Activated CD4-positive, alpha-beta T cell treated with anti-CD3 and anti-CD28 coated beads for 36 hours (primary cell): ENCODE measurements at regions of chr3 and their contacts with region 1.

Region 1: GRCh38 chr3:16048435-16049318 is 125.8 kb upstream of the GALNT15 start:
- DNase-seq: peak; percentile 63
- ATAC-seq: peak; percentile 94
- H3K4me3 Mint-ChIP-seq: no peak overlapping the region
- H3K27ac Mint-ChIP-seq: no peak overlapping the region
- H3K4me1 Mint-ChIP-seq: peaks cover 6% of the 10 kb centered on the region
- H3K27me3 Mint-ChIP-seq: no peaks in the 10 kb centered on the region

Region 2: DNA sequence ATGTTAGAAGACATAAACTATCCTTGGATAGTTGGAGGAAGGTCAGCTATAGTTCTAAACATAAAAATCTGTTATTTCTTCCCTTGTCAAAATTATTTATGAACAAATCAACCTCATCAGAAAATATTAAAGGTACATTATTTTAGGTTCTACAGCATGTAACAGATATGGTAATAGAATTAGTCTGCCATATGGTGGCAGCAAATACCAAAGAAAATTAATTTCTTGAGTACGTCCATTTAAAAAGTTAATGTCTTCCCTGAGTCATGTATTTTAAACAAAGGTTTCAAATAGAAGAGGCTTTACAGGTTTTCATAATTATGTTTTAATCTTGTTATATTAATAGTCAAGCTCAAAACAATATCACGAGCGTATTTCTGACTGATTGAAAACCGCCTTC is 233.0 kb before region 1 on chr3:
- CTCF ChIA-PET with region 1: interaction called, 3 read pairs
- POLR2A ChIA-PET with region 1: no interaction called
- intact Hi-C with region 1: loop called (anchors 2 to 5 kb)
- DNase-seq: no peak
- ATAC-seq: no peak
- H3K4me3 Mint-ChIP-seq: no peak overlapping the region
- H3K27ac Mint-ChIP-seq: no peak overlapping the region
- H3K4me1 Mint-ChIP-seq: peaks cover 41% of the 10 kb centered on the region
- H3K27me3 Mint-ChIP-seq: no peaks in the 10 kb centered on the region

Region 3: DNA sequence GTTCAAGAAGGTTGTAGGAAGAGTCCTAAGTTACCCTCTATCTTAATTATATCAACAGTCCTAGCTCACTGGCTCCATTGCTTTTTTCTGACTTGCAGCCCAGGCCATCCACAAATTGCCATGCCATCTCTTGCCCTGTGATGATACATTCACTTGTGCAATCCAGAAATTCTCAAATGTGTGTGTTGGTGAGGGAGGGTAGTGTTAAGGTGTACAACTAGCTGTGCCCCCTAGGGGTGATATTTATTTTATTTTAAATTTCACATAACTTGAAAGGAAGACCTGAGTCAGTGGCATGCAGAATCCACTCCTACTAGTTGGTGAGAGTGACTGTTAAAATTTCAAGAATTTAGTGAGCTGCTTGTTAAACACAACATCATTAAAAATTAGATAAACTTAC is 94.8 kb before region 1 on chr3:
- CTCF ChIA-PET with region 1: no interaction called
- POLR2A ChIA-PET with region 1: no interaction called
- intact Hi-C with region 1: no loop called
- DNase-seq: no peak
- ATAC-seq: peak; percentile 60
- H3K4me3 Mint-ChIP-seq: no peak overlapping the region
- H3K27ac Mint-ChIP-seq: no peak overlapping the region
- H3K4me1 Mint-ChIP-seq: no peaks in the 10 kb centered on the region
- H3K27me3 Mint-ChIP-seq: peaks cover 2% of the 10 kb centered on the region

Region 4: DNA sequence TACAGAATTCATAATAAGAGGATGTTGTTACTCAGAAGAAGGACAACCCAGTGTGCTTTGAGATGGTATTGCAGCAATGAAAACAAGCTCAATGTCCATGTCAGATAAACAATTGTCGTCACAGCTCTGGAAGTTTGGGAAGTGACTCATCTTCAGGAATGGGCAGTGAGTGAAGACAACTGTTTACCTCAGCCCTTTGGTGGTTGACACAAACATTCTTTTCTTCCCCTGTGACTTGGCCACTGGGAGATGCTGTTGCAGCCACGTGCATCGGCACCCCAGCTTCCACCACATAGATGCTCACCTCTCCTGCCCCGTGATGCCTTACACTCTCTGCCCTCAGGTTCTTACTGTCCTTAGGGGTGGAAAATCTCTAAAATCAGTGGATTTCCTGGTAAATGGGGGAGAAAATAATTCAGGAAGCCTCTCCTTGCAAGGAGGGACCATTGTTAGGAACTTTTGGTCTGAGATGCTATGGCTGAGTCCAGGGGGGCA is 11.7 kb after region 1 on chr3:
- CTCF ChIA-PET with region 1: interaction called, 17 read pairs
- POLR2A ChIA-PET with region 1: no interaction called
- intact Hi-C with region 1: no loop called
- DNase-seq: no peak
- ATAC-seq: no peak
- H3K4me3 Mint-ChIP-seq: no peak overlapping the region
- H3K27ac Mint-ChIP-seq: no peak overlapping the region
- H3K4me1 Mint-ChIP-seq: no peaks in the 10 kb centered on the region
- H3K27me3 Mint-ChIP-seq: peaks cover 2% of the 10 kb centered on the region

Region 5: DNA sequence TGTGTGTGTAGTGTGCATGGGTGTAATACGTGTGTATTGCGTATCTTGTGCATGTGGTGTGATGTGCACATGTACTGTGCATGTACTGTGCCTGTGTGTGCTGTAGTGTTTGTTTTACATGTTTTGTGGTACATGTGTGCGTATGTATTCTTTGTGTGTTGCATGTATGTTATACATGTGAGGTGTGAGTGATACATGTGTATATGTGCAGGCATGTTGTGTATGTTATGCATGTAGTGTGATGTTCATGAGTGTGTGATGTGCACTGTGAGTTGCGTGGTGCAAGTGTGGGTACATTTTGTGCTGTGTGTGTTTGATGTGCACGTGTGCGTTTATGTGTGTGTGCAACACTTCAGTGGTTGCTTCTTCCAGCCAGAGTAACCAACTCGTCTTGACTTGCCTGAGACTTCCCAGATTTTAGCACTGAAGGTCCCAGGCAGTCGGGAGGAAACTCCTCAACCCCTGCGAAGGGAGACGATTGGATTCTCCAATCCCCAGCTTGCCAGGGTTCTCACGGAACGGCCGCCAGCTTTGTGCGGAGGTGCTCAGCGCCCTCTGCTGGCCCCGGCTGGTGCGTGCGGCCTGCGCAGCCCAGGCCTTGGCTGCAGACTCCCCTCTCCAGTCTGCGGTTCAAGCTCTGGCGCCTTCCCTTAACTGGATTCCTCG is 129.4 kb after region 1 on chr3:
- CTCF ChIA-PET with region 1: interaction called, 29 read pairs
- POLR2A ChIA-PET with region 1: no interaction called
- intact Hi-C with region 1: loop called (anchors 1 kb)
- DNase-seq: peak; percentile 85
- ATAC-seq: peak; percentile 87
- H3K4me3 Mint-ChIP-seq: no peak overlapping the region
- H3K27ac Mint-ChIP-seq: no peak overlapping the region
- H3K4me1 Mint-ChIP-seq: no peaks in the 10 kb centered on the region
- H3K27me3 Mint-ChIP-seq: peaks cover 18% of the 10 kb centered on the region

Region 6: GRCh38 chr3:16183601-16184270 is 135.1 kb after region 1 on chr3:
- CTCF ChIA-PET with region 1: interaction called, 29 read pairs
- POLR2A ChIA-PET with region 1: no interaction called
- intact Hi-C with region 1: loop called (anchors 1 kb)
- DNase-seq: no peak
- ATAC-seq: no peak
- H3K4me3 Mint-ChIP-seq: no peak overlapping the region
- H3K27ac Mint-ChIP-seq: no peak overlapping the region
- H3K4me1 Mint-ChIP-seq: no peaks in the 10 kb centered on the region
- H3K27me3 Mint-ChIP-seq: no peaks in the 10 kb centered on the region

Region 7: GRCh38 chr3:16247276-16248061 is 198.8 kb after region 1 on chr3:
- CTCF ChIA-PET with region 1: interaction called, 32 read pairs
- POLR2A ChIA-PET with region 1: no interaction called
- intact Hi-C with region 1: loop called (anchors 1 kb)
- DNase-seq: peak; percentile 88
- ATAC-seq: peak; percentile 83
- H3K4me3 Mint-ChIP-seq: no peak overlapping the region
- H3K27ac Mint-ChIP-seq: no peak overlapping the region
- H3K4me1 Mint-ChIP-seq: peaks cover 17% of the 10 kb centered on the region
- H3K27me3 Mint-ChIP-seq: no peaks in the 10 kb centered on the region

Region 8: GRCh38 chr3:16550676-16551341 is 502.1 kb after region 1 on chr3:
- CTCF ChIA-PET with region 1: no interaction called
- POLR2A ChIA-PET with region 1: no interaction called
- intact Hi-C with region 1: loop called (anchors 1 to 2 kb)
- DNase-seq: peak; percentile 87
- ATAC-seq: peak; percentile 99
- H3K4me3 Mint-ChIP-seq: no peak overlapping the region
- H3K27ac Mint-ChIP-seq: peak overlapping the region; percentile 93
- H3K4me1 Mint-ChIP-seq: peaks cover 14% of the 10 kb centered on the region
- H3K27me3 Mint-ChIP-seq: no peaks in the 10 kb centered on the region